ENCODE measurements at regions of chr2 and their contacts with region 1.

Region 1: DNA sequence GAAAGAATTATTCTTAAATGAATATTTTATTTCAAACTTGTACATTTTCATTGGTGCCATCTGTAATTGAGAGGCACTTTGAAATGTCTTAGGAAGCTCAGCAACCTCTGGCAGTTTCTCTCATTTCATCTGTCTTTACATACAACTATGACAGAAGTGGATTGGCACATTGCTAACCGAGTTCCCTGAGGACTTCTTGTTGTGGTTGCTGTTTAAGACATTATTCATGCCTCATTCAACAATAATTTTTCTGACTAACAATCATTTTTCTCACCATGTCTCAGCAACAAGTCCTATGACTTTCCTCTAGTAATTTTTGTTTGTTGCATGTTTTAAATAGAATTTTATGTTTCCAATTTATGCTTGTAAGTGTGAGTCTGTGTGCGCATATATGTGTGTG is 284.0 kb upstream of the CWC22 start:
- DNase-seq: peak; percentile 60
- ATAC-seq: no peak; the same call in 1 of the 2 replicates
- H3K4me3 ChIP-seq: no peak overlapping the region
- H3K27ac ChIP-seq: no peak overlapping the region
- H3K4me1 ChIP-seq: peaks cover 3% of the 10 kb centered on the region
- H3K27me3 ChIP-seq: no peaks in the 10 kb centered on the region
- CTCF ChIP-seq: no peak
- POLR2A ChIP-seq: no peak
- RAD21 ChIP-seq: no peak

Region 2: DNA sequence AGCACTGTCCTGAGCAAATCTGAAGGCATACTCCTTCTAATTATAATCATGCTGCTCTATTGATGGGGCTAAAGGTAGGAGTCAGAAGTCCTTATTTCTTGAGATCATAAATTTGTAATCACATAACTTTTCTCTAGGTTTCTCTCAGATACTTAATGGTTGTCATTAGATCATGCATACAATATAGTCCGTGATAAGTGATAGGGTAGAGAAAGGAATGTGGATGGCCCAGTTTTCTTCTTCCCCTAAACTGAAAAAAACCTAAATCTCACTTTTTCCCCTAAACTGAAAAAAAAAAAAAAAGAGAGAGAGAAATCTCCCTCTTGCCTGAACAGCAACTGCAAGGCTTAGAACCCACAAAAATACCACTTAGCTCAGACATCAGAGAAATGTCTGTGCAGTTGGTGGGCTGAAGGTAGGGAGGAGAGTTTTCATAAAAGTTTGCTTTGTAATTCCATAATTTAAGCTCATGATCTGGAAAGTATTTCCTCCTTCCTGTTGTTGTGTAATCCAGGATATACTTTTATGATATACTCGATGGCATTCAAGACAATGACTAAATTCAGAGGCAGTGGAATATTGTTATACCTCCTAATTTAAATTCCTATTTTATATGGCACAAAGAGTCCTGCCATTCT is 1521.2 kb after region 1 on chr2:
- CTCF ChIA-PET with region 1: no interaction called
- POLR2A ChIA-PET with region 1: interaction called, 11 read pairs
- dilution Hi-C with region 1: no loop called
- in situ Hi-C with region 1: no loop called
- intact Hi-C with region 1: no loop called
- DNase-seq: peak; percentile 34
- ATAC-seq: no peak
- H3K4me3 ChIP-seq: no peak overlapping the region
- H3K27ac ChIP-seq: no peak overlapping the region
- H3K4me1 ChIP-seq: peaks cover 7% of the 10 kb centered on the region
- H3K27me3 ChIP-seq: no peaks in the 10 kb centered on the region
- CTCF ChIP-seq: no peak
- POLR2A ChIP-seq: no peak
- RAD21 ChIP-seq: no peak